ENCODE measurements at regions of chr3 and their contacts with region 1.

Region 1: DNA sequence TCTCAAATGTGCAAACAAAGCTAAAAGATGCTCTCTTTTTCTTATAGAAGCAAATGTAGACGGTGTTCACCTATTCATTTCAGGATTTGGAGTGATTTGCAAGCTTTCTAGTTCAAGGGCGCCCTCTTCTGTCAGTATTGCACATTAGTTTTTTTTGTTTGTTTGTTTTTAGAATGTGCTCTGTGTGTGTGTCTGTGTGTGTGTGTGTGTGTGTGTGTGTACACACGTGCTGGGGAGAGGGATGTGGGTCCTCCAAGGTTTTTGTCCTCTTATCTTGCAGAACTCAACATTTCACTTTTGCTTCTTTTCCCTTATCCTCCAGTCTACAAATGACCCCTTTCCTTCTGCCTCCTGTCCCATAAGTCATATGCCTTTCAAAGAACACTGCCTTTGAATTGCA is 23.5 kb downstream of the DNAH1 start:
- DNase-seq: no peak
- ATAC-seq: peak; percentile 88
- H3K4me3 ChIP-seq: no peak overlapping the region
- H3K27ac ChIP-seq: no peak overlapping the region
- H3K4me1 ChIP-seq: no peaks in the 10 kb centered on the region
- H3K27me3 ChIP-seq: no peaks in the 10 kb centered on the region
- CTCF ChIP-seq: peak; percentile 71

Region 2: GRCh38 chr3:52070724-52071621 is 268.6 kb before region 1 on chr3:
- intact Hi-C with region 1: no loop called
- DNase-seq: peak; percentile 79
- ATAC-seq: peak; percentile 73
- H3K4me3 ChIP-seq: no peak overlapping the region
- H3K27ac ChIP-seq: peak overlapping the region; percentile 75
- H3K4me1 ChIP-seq: peaks cover 28% of the 10 kb centered on the region
- H3K27me3 ChIP-seq: no peaks in the 10 kb centered on the region
- CTCF ChIP-seq: no peak

Region 3: GRCh38 chr3:52220380-52221026 is 119.1 kb before region 1 on chr3:
- intact Hi-C with region 1: loop called (anchors 5 kb)
- DNase-seq: peak; percentile 92
- ATAC-seq: peak; percentile 86
- H3K4me3 ChIP-seq: no peak overlapping the region
- H3K27ac ChIP-seq: no peak overlapping the region
- H3K4me1 ChIP-seq: peaks cover 50% of the 10 kb centered on the region
- H3K27me3 ChIP-seq: no peaks in the 10 kb centered on the region
- CTCF ChIP-seq: peak; percentile 93

Region 4: GRCh38 chr3:52231502-52232293 is 107.9 kb before region 1 on chr3:
- intact Hi-C with region 1: loop called (anchors 5 kb)
- DNase-seq: peak; percentile 91
- ATAC-seq: peak; percentile 86
- H3K4me3 ChIP-seq: no peak overlapping the region
- H3K27ac ChIP-seq: no peak overlapping the region
- H3K4me1 ChIP-seq: peaks cover 5% of the 10 kb centered on the region
- H3K27me3 ChIP-seq: no peaks in the 10 kb centered on the region
- CTCF ChIP-seq: peak; percentile 92